ENCODE measurements at regions of chr4 and their contacts with region 1.

Region 1: GRCh38 chr4:38574559-38575333 is 89.3 kb upstream of the KLF3 start:
- DNase-seq: peak; percentile 68 to 74 (median 72)
- H3K4me3 ChIP-seq: peak overlapping the region in 1 of 3 experiments; percentile 10
- H3K4me3 Mint-ChIP-seq: peak overlapping the region in 1 of 2 donors; percentile 76
- H3K27ac ChIP-seq: peak overlapping the region in 1 of 2 donors; percentile 49
- H3K27ac Mint-ChIP-seq: peak overlapping the region; percentile 60 to 90 (median 76)
- H3K4me1 ChIP-seq: peaks cover 14 to 16% of the 10 kb centered on the region in 2 donors
- H3K4me1 Mint-ChIP-seq: peaks cover 18% of the 10 kb centered on the region
- H3K27me3 ChIP-seq: no peaks in the 10 kb centered on the region
- H3K27me3 Mint-ChIP-seq: no peaks in the 10 kb centered on the region
- CTCF ChIP-seq: no peak

Region 2: GRCh38 chr4:38605753-38606586 is 31.2 kb after region 1 on chr4:
- intact Hi-C with region 1: loop called in 1 of 2 experiments (anchors 5 kb)
- DNase-seq: no peak
- H3K4me3 ChIP-seq: no peak overlapping the region
- H3K4me3 Mint-ChIP-seq: no peak overlapping the region
- H3K27ac ChIP-seq: no peak overlapping the region
- H3K27ac Mint-ChIP-seq: no peak overlapping the region
- H3K4me1 ChIP-seq: peaks cover 24 to 32% of the 10 kb centered on the region in 2 donors
- H3K4me1 Mint-ChIP-seq: peaks cover 43% of the 10 kb centered on the region
- H3K27me3 ChIP-seq: no peaks in the 10 kb centered on the region
- H3K27me3 Mint-ChIP-seq: peaks cover 0 to 5% (median 0%) of the 10 kb centered on the region in 3 donors
- CTCF ChIP-seq: no peak

Measured in CD14-positive monocyte (primary cell).